Activated T-helper 2 cell treated with anti-CD3 and anti-CD28 coated beads, Interferon-gamma antibody, Interleukin-2, Interleukin-4, amounts not matched to agents 10 μg/mL and 5 μg/mL and 100 μg/mL, durations not matched to agents 14 hours and 24 hours and 36 hours (primary cell): ENCODE measurements at regions of chr3 and their contacts with region 1.

Region 1: GRCh38 chr3:71652781-71653413 is 69.4 kb upstream of the FOXP1 start:
- DNase-seq: no peak
- H3K4me3 Mint-ChIP-seq: no peak overlapping the region
- H3K27ac Mint-ChIP-seq: no peak overlapping the region
- H3K4me1 Mint-ChIP-seq: peaks cover 3% of the 10 kb centered on the region
- H3K27me3 Mint-ChIP-seq: peaks cover 5% of the 10 kb centered on the region

Region 2: DNA sequence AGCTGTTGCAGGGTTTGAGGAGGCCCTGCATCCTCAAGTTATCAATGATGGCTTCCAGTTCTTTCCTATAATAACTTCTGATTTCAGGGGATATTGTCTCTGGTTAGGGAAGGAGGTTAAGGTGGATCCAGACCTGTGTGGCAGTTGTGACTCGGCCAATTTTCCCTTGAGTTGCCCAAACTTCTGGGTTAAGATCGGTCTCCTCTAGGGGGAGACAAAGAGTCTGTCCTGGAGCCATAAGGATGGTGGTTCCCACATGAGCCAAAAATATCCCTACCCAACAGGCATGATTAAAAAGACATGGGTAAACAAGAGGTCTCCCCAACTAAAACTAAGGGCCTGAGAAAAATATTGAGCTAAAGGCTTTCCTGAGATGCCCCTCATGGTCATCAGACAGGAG is 1113.0 kb before region 1 on chr3:
- intact Hi-C with region 1: loop called (anchors 10 kb)
- DNase-seq: no peak
- H3K4me3 Mint-ChIP-seq: no peak overlapping the region
- H3K27ac Mint-ChIP-seq: no peak overlapping the region
- H3K4me1 Mint-ChIP-seq: no peaks in the 10 kb centered on the region
- H3K27me3 Mint-ChIP-seq: peaks cover 17% of the 10 kb centered on the region